Ovary (tissue), 10 donors: ENCODE measurements at regions of chr9 and their contacts with region 1.

Region 1: GRCh38 chr9:123975871-123976270 is 35.7 kb upstream of the LHX2 start:
- DNase-seq: no peak
- H3K4me3 ChIP-seq: no peak overlapping the region
- H3K27ac ChIP-seq: no peak overlapping the region
- H3K4me1 ChIP-seq: no peaks in the 10 kb centered on the region
- H3K27me3 ChIP-seq: no peaks in the 10 kb centered on the region
- CTCF ChIP-seq: no peak
- EP300 ChIP-seq: no peak
- POLR2A ChIP-seq: no peak

Region 2: GRCh38 chr9:123988311-123989049 is 12.6 kb after region 1 on chr9:
- intact Hi-C with region 1: loop called in 2 of 4 experiments (anchors 2 kb)
- DNase-seq: no peak
- H3K4me3 ChIP-seq: no peak overlapping the region
- H3K27ac ChIP-seq: no peak overlapping the region
- H3K4me1 ChIP-seq: no peaks in the 10 kb centered on the region
- H3K27me3 ChIP-seq: no peaks in the 10 kb centered on the region
- CTCF ChIP-seq: no peak
- EP300 ChIP-seq: no peak
- POLR2A ChIP-seq: no peak

Region 3: GRCh38 chr9:123997665-123998277 is 21.9 kb after region 1 on chr9:
- intact Hi-C with region 1: loop called in 1 of 4 experiments (anchors 2 kb)
- DNase-seq: peak in 1 of 5 donors; percentile 40
- H3K4me3 ChIP-seq: no peak overlapping the region
- H3K27ac ChIP-seq: no peak overlapping the region
- H3K4me1 ChIP-seq: peaks cover 2% of the 10 kb centered on the region
- H3K27me3 ChIP-seq: peaks cover 12% of the 10 kb centered on the region
- CTCF ChIP-seq: no peak
- EP300 ChIP-seq: no peak
- POLR2A ChIP-seq: no peak